ENCODE measurements at regions of chr5 and their contacts with region 1.

Region 1: DNA sequence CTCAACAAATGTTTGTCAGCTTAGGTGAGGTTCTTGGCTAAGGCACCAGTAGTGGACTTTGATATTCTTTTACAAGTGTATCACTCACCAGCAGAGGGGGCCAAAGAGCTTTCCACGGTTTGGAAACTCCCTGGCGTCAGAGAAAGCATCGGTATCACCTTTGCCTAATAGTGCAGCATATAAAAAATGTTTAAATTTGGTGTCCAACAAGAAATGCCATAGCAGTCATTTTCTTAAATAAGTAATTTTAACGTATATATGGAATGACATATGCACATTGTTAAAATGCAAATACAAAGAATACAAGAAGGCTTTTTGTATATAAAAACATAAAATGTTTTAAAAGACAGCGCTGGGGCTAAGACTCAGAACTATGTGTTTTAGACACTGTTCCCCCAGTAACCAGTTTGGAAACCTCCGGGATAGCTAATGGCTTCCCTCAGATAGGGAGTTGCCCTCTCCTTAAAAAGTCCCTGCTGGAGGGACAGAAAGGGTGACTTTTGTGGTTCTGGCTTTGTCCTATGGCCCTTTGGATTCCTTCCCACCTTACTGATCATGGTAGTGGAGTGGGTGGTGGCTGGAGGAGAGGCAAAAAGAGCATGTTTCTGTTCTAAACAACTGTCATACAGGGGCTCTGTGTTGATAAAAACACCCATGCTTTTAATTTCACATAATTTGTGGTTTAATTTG is 124.6 kb downstream of the GPBP1 start:
- DNase-seq: peak; percentile 56 to 85 (median 79)
- ATAC-seq: peak; percentile 94
- H3K4me3 ChIP-seq: peak overlapping the region; percentile 34
- H3K4me3 Mint-ChIP-seq: peak overlapping the region; percentile 72 to 80 (median 77)
- H3K27ac ChIP-seq: peak overlapping the region; percentile 26
- H3K27ac Mint-ChIP-seq: peak overlapping the region in 8 of 9 donors; percentile 13 to 90 (median 56)
- H3K4me1 ChIP-seq: peaks cover 8 to 9% of the 10 kb centered on the region in 2 donors
- H3K4me1 Mint-ChIP-seq: peaks cover 6 to 22% (median 14%) of the 10 kb centered on the region in 7 donors
- H3K27me3 ChIP-seq: no peaks in the 10 kb centered on the region
- H3K27me3 Mint-ChIP-seq: peaks cover 0 to 5% (median 0%) of the 10 kb centered on the region in 5 donors

Region 2: DNA sequence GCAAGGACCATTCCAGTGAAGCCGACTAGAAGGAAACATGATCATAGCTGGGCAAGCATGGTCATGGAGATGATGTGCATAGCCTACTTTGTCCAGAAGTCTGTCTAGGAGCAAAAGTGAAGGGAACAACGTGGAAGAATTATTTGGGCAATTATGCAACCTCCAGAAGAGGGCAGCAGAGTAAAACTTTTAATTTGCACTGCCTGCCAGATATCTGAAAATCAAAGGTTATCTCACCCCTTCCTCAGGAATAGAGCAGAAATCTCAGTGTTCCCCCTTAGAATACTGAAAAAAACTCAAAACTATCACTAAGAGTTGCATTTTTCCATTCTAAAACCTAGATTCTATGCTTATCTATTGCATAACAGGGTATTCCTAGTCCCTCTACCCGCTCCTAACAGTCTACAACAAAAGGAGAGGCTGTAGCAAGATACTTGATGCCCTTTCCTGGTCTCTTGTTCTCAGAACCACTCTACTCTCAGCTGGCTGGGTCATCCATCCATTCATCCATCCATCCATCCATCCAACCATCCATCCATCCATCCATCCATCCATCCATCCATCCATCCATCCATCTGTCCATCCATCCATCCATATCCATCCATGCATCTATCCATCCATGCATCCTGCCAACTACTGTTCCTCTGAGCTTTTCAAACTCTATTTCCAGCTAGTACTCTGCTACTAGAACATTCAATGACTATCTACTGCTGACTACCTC is 397.4 kb before region 1 on chr5:
- CTCF ChIA-PET with region 1: interaction called, 3 read pairs
- POLR2A ChIA-PET with region 1: no interaction called
- intact Hi-C with region 1: loop called in 1 of 2 experiments (anchors 1 kb)
- DNase-seq: peak in 7 of 9 donors; percentile 20 to 62 (median 51)
- ATAC-seq: peak; percentile 81
- H3K4me3 ChIP-seq: no peak overlapping the region
- H3K4me3 Mint-ChIP-seq: no peak overlapping the region
- H3K27ac ChIP-seq: no peak overlapping the region
- H3K27ac Mint-ChIP-seq: no peak overlapping the region
- H3K4me1 ChIP-seq: no peaks in the 10 kb centered on the region
- H3K4me1 Mint-ChIP-seq: peaks cover 0 to 6% (median 0%) of the 10 kb centered on the region in 7 donors
- H3K27me3 ChIP-seq: no peaks in the 10 kb centered on the region
- H3K27me3 Mint-ChIP-seq: peaks cover 0 to 15% (median 0%) of the 10 kb centered on the region in 5 donors

Region 3: GRCh38 chr5:57349214-57349613 is 50.8 kb after region 1 on chr5:
- CTCF ChIA-PET with region 1: no interaction called
- POLR2A ChIA-PET with region 1: no interaction called
- intact Hi-C with region 1: no loop called
- DNase-seq: no peak
- ATAC-seq: no peak
- H3K4me3 ChIP-seq: no peak overlapping the region
- H3K4me3 Mint-ChIP-seq: no peak overlapping the region
- H3K27ac ChIP-seq: no peak overlapping the region
- H3K27ac Mint-ChIP-seq: no peak overlapping the region
- H3K4me1 ChIP-seq: no peaks in the 10 kb centered on the region
- H3K4me1 Mint-ChIP-seq: no peaks in the 10 kb centered on the region
- H3K27me3 ChIP-seq: no peaks in the 10 kb centered on the region
- H3K27me3 Mint-ChIP-seq: peaks cover 0 to 3% (median 0%) of the 10 kb centered on the region in 5 donors

Region 4: GRCh38 chr5:57494104-57495098 is 196.0 kb after region 1 on chr5:
- CTCF ChIA-PET with region 1: no interaction called
- POLR2A ChIA-PET with region 1: no interaction called
- intact Hi-C with region 1: loop called (anchors 1 kb)
- DNase-seq: peak in 1 of 9 donors; percentile 28
- ATAC-seq: no peak
- H3K4me3 ChIP-seq: no peak overlapping the region
- H3K4me3 Mint-ChIP-seq: peak overlapping the region in 9 of 10 donors; percentile 41 to 79 (median 69)
- H3K27ac ChIP-seq: peak overlapping the region; percentile 50
- H3K27ac Mint-ChIP-seq: peak overlapping the region; percentile 80 to 96 (median 93)
- H3K4me1 ChIP-seq: peaks cover 0 to 26% of the 10 kb centered on the region in 2 donors
- H3K4me1 Mint-ChIP-seq: peaks cover 28 to 58% (median 45%) of the 10 kb centered on the region in 7 donors
- H3K27me3 ChIP-seq: no peaks in the 10 kb centered on the region
- H3K27me3 Mint-ChIP-seq: no peaks in the 10 kb centered on the region

Region 5: DNA sequence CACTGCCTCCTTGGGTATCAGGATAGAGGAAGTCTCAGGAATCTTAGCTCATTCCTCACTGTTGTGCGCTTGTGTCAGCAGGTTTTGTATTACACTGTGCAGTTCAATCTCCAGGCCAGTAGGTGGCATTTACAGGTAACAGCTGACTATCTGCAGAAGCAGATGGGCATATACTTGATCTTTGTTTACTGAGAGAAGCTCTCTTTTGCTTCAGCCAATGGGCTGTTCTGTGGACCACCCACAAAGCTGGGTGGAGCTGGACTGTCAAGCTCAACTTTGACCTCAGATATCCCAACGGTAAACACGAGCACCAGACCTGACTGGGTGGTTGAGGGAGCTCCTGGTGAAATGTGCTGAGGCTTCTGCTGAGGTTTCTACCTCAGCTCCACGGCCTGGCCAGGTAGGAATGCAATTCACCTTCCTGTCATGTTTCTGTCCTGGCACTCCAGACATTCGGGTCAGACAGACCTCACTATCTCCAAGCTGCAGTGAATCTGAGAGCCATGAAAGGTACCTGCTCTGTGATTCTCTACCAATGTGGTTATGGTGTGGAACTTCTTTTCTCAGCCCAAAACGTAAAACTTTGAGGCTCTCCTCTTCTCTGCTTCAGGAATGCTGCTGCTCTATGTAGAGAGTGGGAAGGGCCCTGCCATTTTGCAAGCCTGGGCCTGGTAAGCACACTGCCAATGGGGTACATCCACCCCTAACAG is 352.1 kb after region 1 on chr5:
- CTCF ChIA-PET with region 1: no interaction called
- POLR2A ChIA-PET with region 1: no interaction called
- intact Hi-C with region 1: loop called (anchors 1 to 10 kb)
- DNase-seq: peak in 5 of 9 donors; percentile 8 to 27 (median 15)
- ATAC-seq: peak; percentile 55
- H3K4me3 ChIP-seq: no peak overlapping the region
- H3K4me3 Mint-ChIP-seq: no peak overlapping the region
- H3K27ac ChIP-seq: no peak overlapping the region
- H3K27ac Mint-ChIP-seq: no peak overlapping the region
- H3K4me1 ChIP-seq: no peaks in the 10 kb centered on the region
- H3K4me1 Mint-ChIP-seq: no peaks in the 10 kb centered on the region
- H3K27me3 ChIP-seq: no peaks in the 10 kb centered on the region
- H3K27me3 Mint-ChIP-seq: peaks cover 8 to 23% (median 16%) of the 10 kb centered on the region in 5 donors

Region 6: GRCh38 chr5:58071566-58071965 is 773.1 kb after region 1 on chr5:
- CTCF ChIA-PET with region 1: no interaction called
- POLR2A ChIA-PET with region 1: no interaction called
- intact Hi-C with region 1: loop called in 1 of 2 experiments (anchors 5 kb)
- DNase-seq: no peak
- ATAC-seq: no peak
- H3K4me3 ChIP-seq: no peak overlapping the region
- H3K4me3 Mint-ChIP-seq: no peak overlapping the region
- H3K27ac ChIP-seq: no peak overlapping the region
- H3K27ac Mint-ChIP-seq: no peak overlapping the region
- H3K4me1 ChIP-seq: no peaks in the 10 kb centered on the region
- H3K4me1 Mint-ChIP-seq: peaks cover 0 to 5% (median 0%) of the 10 kb centered on the region in 7 donors
- H3K27me3 ChIP-seq: no peaks in the 10 kb centered on the region
- H3K27me3 Mint-ChIP-seq: peaks cover 0 to under 1% (median 0%) of the 10 kb centered on the region in 5 donors

Measured in naive thymus-derived CD4-positive, alpha-beta T cell (primary cell).